Activated CD8-positive, alpha-beta T cell treated with anti-CD3 and anti-CD28 coated beads, Interleukin-2, amount 10 ng/mL, durations not matched to agents 7 days and 5 days (primary cell): ENCODE measurements at regions of chr6 and their contacts with region 1.

Region 1: DNA sequence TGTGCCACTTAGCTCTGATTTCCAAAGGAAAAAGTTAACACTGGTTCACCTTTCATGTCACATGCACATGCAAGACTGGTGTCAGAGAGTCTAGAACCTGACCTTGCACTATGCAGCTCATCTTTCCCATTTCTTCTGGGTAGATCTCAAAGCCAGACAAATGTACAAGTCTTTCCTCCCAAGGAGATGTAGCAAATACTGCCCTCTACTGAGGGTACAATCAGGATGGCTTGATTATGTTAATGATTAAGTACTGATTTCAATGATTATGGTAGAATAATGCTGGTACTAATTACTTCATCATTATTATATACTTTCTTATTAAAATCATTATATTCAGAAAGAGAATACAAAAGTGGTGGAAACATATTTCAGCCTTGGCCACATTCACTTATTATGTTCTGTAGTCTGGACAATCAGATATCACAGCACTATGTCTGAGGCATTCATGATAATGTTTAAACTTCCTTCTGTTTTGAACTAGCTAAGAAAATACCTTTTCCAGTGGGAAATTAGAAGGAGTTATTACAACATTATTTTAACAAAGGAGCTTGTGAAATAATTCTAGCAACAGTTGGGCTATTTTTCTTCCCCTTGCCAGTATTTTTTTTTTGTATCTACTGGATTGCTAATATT is 68.5 kb upstream of the FOXO3 start:
- DNase-seq: no peak
- ATAC-seq: no peak
- H3K4me3 Mint-ChIP-seq: no peak overlapping the region
- H3K27ac Mint-ChIP-seq: no peak overlapping the region
- H3K4me1 Mint-ChIP-seq: no peaks in the 10 kb centered on the region
- H3K27me3 Mint-ChIP-seq: peaks cover 4% of the 10 kb centered on the region

Region 2: DNA sequence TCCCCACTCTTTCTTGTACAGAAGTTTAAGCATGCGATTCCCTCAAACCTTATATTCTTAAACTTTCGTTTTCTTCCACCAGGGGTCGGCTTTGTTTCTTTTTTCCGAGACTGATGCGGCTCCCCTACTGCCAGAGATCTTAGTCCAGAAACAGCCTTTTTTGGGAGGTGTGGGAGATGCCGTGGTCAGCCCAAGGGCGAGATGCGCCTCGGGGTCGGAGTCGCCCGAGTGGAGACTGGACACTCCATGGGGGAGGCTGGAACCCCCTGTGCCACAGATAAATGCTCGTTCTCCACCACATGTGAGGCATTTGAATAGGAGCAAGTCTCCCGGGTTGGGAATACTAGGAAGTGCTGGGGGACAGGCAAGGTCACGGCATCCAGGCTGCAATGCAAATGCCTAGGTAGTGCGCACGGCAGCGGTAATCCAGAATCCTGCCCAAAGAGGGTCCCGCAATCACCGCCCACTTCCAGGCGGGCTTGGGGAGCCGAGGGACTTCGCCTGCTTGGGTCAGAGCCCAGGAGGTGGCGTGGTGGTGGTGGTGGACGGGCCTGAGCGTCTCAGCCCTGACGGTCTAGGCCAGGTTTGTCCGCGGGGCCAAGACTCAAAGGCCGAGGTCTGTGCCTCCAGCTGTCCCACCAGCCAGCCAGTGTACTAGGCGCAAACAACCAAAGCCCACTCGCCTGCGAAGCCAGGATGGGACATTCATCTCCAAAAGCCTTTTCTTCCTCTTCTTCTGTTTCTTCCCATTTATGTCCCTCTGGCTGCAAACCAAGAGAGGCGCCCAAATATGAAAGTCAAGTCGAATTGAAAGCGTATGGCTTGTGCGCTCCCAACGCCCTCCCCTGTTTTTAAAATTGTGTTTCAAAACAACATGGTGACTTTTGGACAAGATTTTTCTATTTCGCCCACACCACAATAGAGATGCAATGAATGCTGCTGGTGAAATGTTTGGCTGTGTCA is 378.4 kb before region 1 on chr6:
- CTCF ChIA-PET with region 1: interaction called, 68 read pairs
- POLR2A ChIA-PET with region 1: no interaction called
- DNase-seq: peak; percentile 50
- ATAC-seq: no peak
- H3K4me3 Mint-ChIP-seq: peak overlapping the region; percentile 70
- H3K27ac Mint-ChIP-seq: no peak overlapping the region
- H3K4me1 Mint-ChIP-seq: peaks cover 37% of the 10 kb centered on the region
- H3K27me3 Mint-ChIP-seq: peaks cover 69% of the 10 kb centered on the region

Region 3: GRCh38 chr6:108168501-108169463 is 323.5 kb before region 1 on chr6:
- CTCF ChIA-PET with region 1: interaction called, 12 read pairs
- POLR2A ChIA-PET with region 1: no interaction called
- DNase-seq: no peak
- ATAC-seq: peak; percentile 34
- H3K4me3 Mint-ChIP-seq: peak overlapping the region; percentile 36
- H3K27ac Mint-ChIP-seq: peak overlapping the region; percentile 34
- H3K4me1 Mint-ChIP-seq: peaks cover 33% of the 10 kb centered on the region
- H3K27me3 Mint-ChIP-seq: peaks cover 81% of the 10 kb centered on the region

Region 4: DNA sequence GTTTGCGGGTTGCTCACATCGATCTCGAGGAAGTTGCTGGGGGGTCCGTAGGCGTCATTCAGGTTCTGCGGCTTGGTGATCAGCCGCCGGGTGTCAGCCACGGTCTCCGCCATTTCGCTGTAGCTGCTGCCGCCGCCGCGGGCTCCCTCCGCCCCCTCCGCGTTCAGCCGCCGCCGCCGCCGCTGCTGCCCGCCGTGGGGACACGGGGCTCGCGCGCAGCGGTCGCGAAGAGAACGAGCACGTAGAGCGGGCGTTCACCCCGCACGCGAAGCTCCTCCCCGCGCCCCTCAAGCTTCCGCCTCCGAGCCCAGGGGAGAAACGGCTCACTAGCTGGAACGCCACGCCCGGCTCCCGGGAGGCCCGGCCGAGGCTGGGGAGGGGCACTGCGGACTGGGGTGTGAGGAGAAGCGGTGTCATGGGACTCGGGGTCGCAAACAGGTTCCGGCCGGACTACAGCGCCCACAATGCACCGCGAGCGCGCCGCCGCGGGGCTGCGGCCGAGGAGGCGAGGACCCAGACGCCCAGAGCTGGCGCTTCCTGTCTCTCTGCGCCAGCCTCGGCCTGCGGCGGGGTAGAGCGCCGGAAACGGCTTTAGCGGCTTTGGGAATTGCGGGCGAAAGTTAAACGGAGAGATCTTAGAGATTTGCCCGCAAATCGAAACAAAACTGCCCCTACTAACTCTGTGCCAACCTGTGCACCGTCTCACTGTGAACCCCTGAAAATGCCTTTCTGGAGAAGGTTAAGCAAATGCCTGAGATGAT is 231.3 kb before region 1 on chr6 and contains the start of gene SNX3:
- CTCF ChIA-PET with region 1: interaction called, 22 read pairs
- POLR2A ChIA-PET with region 1: no interaction called
- DNase-seq: peak; percentile 92
- ATAC-seq: peak; percentile 90
- H3K4me3 Mint-ChIP-seq: peak within 1 kb of the TSS; percentile 69
- H3K27ac Mint-ChIP-seq: peak within 1 kb of the TSS; percentile 80
- H3K4me1 Mint-ChIP-seq: peaks cover 20% of the 10 kb centered on the region
- H3K27me3 Mint-ChIP-seq: peaks cover 3% of the 10 kb centered on the region
- total RNA-seq, gene SNX3: 91.5 to 91.9 TPM

Region 5: GRCh38 chr6:108432792-108433191 is 59.5 kb before region 1 on chr6:
- CTCF ChIA-PET with region 1: no interaction called
- POLR2A ChIA-PET with region 1: no interaction called
- DNase-seq: no peak
- ATAC-seq: no peak
- H3K4me3 Mint-ChIP-seq: no peak overlapping the region
- H3K27ac Mint-ChIP-seq: no peak overlapping the region
- H3K4me1 Mint-ChIP-seq: peaks cover 4% of the 10 kb centered on the region
- H3K27me3 Mint-ChIP-seq: no peaks in the 10 kb centered on the region

Region 6: GRCh38 chr6:108476847-108477430 is 15.3 kb before region 1 on chr6:
- CTCF ChIA-PET with region 1: interaction called, 17 read pairs
- POLR2A ChIA-PET with region 1: no interaction called
- DNase-seq: no peak
- ATAC-seq: no peak
- H3K4me3 Mint-ChIP-seq: no peak overlapping the region
- H3K27ac Mint-ChIP-seq: no peak overlapping the region
- H3K4me1 Mint-ChIP-seq: no peaks in the 10 kb centered on the region
- H3K27me3 Mint-ChIP-seq: no peaks in the 10 kb centered on the region

Region 7: DNA sequence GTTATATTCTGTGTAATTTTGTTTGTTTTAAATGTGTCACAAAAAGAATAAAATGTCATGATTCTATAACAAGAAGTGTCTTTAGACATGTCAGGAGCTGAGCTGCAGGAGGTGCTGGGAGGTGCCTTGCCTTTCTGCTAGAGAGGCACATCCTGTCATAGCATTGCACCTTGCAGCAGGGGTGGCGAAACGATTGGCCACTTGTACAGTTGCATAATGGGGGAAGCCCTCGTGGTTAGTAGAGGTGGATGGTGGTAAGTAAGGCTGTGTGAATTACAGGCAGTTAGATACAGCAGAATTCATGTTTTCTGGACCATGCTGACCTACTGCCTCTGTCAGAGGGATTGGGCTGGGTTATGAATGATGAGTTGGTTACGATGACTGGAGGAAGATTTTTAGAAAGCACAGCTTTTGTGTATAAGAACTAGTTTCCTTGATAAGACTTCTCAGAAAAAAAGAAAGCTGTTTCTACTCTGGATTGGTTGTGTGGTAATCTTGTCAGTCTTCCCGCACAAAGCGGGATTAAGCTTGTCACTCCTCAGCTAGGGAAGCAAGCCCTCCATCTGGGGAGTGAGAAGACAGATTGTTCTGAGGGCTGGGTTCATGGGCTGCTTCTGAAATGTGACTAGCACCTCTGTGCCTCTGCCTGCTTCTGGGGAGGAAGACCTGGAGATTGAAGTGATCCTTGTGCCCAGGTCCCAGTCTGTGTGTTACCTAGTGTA is 143.4 kb after region 1 on chr6:
- CTCF ChIA-PET with region 1: no interaction called
- POLR2A ChIA-PET with region 1: no interaction called
- DNase-seq: peak; percentile 79
- ATAC-seq: peak; percentile 91
- H3K4me3 Mint-ChIP-seq: peak overlapping the region; percentile 9
- H3K27ac Mint-ChIP-seq: peak overlapping the region; percentile 9
- H3K4me1 Mint-ChIP-seq: peaks cover 38% of the 10 kb centered on the region
- H3K27me3 Mint-ChIP-seq: no peaks in the 10 kb centered on the region